SK-N-SH (cell line): ENCODE measurements at regions of chr2 and their contacts with region 1.

Region 1: GRCh38 chr2:23351388-23352141 is 33.4 kb upstream of the KLHL29 start:
- DNase-seq: peak; percentile 98
- H3K4me3 ChIP-seq: no peak overlapping the region
- H3K27ac ChIP-seq: peak overlapping the region in 1 of 2 experiments; percentile 76; a peak in 2 of 4 replicates
- H3K4me1 ChIP-seq: peaks cover 4 to 24% of the 10 kb centered on the region in 2 experiments; a peak in 2 of 4 replicates
- H3K27me3 ChIP-seq: no peaks in the 10 kb centered on the region
- CTCF ChIP-seq: peak; percentile 91
- EP300 ChIP-seq: peak in 1 of 2 experiments; percentile 38; a peak in 1 of 4 replicates
- RAD21 ChIP-seq: peak; percentile 85

Region 2: DNA sequence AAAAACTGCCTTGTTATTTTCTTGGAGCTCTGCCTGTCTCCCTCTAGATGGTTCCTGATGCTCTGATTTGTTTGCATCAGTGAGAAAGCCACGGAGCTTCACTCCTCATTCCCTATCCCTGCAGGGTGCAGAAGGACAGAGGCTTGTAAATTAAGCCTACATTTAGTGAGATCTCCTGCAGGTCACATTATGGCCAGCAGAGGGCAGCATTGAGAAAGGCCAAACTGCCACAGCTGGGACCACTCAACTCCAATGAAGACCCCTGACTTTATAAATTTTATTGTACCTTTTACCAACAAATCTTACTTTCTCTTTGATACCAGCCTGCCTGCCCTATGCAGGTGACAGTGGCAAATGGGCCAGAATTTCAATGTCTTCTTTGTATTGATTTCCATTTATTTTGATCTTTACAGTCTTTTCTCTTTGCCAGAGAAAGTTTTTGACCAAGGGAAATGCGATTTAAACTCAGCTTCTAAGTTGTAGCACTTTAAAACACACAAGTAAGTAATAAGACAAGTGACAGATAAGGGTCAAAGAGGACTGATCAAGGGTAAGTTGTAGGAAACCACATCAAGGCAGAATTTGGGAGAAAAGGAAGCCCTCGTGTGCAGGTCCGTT is 995.6 kb before region 1 on chr2:
- CTCF ChIA-PET with region 1: interaction called, 29 read pairs
- POLR2A ChIA-PET with region 1: no interaction called
- DNase-seq: peak; percentile 56
- H3K4me3 ChIP-seq: peak overlapping the region in 1 of 2 experiments; percentile 42; a peak in 1 of 4 replicates
- H3K27ac ChIP-seq: no peak overlapping the region
- H3K4me1 ChIP-seq: no peaks in the 10 kb centered on the region
- H3K27me3 ChIP-seq: no peaks in the 10 kb centered on the region
- CTCF ChIP-seq: peak; percentile 68
- EP300 ChIP-seq: no peak
- RAD21 ChIP-seq: peak; percentile 84

Region 3: DNA sequence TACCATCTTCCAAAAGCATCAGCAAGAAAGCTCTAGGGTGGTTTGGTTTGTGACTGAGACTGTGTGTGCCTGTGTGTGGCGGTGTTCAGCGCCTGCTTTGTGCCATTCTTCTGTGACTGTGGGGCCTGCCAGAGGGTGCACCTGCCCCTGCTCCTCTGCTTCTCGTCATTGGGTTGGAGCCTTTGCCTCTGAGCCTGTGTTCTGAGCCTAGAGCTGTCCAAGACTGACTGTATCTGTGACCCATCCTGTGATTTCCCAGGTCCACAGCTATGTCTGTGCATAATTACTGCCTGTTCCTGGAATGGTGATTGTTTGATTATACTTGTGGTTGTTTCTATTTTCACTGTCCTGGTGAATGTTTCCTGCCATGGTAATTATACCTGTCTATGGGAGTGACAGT is 23.7 kb before region 1 on chr2:
- CTCF ChIA-PET with region 1: interaction called, 16 read pairs
- POLR2A ChIA-PET with region 1: no interaction called
- DNase-seq: peak; percentile 63
- H3K4me3 ChIP-seq: no peak overlapping the region
- H3K27ac ChIP-seq: peak overlapping the region in 1 of 2 experiments; percentile 56; a peak in 2 of 4 replicates
- H3K4me1 ChIP-seq: peaks cover 0 to 16% of the 10 kb centered on the region in 2 experiments; a peak in 1 of 4 replicates
- H3K27me3 ChIP-seq: peaks cover 15% of the 10 kb centered on the region; the same call in 1 of the 2 replicates
- CTCF ChIP-seq: no peak
- EP300 ChIP-seq: peak in 1 of 2 experiments; percentile 7; a peak in 1 of 4 replicates
- RAD21 ChIP-seq: no peak

Region 4: GRCh38 chr2:23335550-23335949 is 16.0 kb before region 1 on chr2:
- CTCF ChIA-PET with region 1: interaction called, 10 read pairs
- POLR2A ChIA-PET with region 1: no interaction called
- DNase-seq: no peak
- H3K4me3 ChIP-seq: no peak overlapping the region
- H3K27ac ChIP-seq: no peak overlapping the region
- H3K4me1 ChIP-seq: peaks cover 0 to 1% of the 10 kb centered on the region in 2 experiments; a peak in 1 of 4 replicates
- H3K27me3 ChIP-seq: peaks cover 10% of the 10 kb centered on the region; the same call in 1 of the 2 replicates
- CTCF ChIP-seq: no peak
- EP300 ChIP-seq: no peak
- RAD21 ChIP-seq: no peak

Region 5: DNA sequence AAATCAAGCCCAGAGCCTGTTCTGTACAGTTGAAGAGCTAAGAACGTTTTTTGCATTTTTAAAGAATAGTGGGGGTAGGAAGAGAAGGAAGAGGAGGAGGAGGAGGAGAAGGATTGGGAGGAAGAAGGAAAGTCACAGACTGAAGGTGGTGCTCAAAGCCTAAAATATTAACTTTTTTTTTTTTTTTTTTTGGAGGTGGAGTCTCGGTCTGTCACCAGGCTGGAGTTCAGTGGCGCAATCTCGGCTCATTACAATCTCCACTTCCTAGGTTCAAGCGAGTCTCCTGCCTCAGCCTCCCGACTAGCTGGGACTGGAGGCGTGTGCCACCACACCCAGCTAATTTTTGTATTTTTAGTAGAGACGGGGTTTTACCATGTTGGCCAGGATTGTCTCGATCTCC is 15.2 kb after region 1 on chr2:
- CTCF ChIA-PET with region 1: interaction called, 32 read pairs
- POLR2A ChIA-PET with region 1: interaction called, 3 read pairs
- DNase-seq: no peak
- H3K4me3 ChIP-seq: no peak overlapping the region
- H3K27ac ChIP-seq: no peak overlapping the region
- H3K4me1 ChIP-seq: peaks cover 3 to 11% of the 10 kb centered on the region in 2 experiments; a peak in 3 of 4 replicates
- H3K27me3 ChIP-seq: no peaks in the 10 kb centered on the region
- CTCF ChIP-seq: no peak
- EP300 ChIP-seq: no peak
- RAD21 ChIP-seq: no peak

Region 6: GRCh38 chr2:23449413-23449812 is 97.8 kb after region 1 on chr2:
- CTCF ChIA-PET with region 1: no interaction called
- POLR2A ChIA-PET with region 1: no interaction called
- DNase-seq: no peak
- H3K4me3 ChIP-seq: no peak overlapping the region
- H3K27ac ChIP-seq: no peak overlapping the region
- H3K4me1 ChIP-seq: peaks cover 10 to 32% of the 10 kb centered on the region in 2 experiments; a peak in 3 of 4 replicates
- H3K27me3 ChIP-seq: no peaks in the 10 kb centered on the region
- CTCF ChIP-seq: no peak
- EP300 ChIP-seq: no peak
- RAD21 ChIP-seq: no peak

Region 7: DNA sequence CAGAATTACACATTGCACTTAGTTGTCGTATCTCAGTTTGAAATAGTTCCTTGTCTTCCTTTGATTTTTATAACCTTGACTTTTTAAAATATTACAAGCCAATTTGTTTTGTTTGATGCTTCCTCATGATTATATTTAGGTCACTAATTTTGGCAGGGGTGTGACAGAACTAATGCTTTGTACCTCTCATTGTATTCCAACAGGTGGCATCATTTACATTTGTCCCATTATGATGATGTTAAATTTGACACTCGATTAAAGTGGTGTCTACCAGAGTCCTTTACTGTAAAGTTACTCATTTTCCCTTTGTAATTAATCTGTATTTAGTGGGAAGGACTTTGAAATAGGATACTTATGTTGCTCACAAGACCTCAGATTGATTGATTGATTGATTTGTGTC is 636.8 kb after region 1 on chr2:
- CTCF ChIA-PET with region 1: no interaction called
- POLR2A ChIA-PET with region 1: no interaction called
- DNase-seq: no peak
- H3K4me3 ChIP-seq: no peak overlapping the region
- H3K27ac ChIP-seq: no peak overlapping the region
- H3K4me1 ChIP-seq: no peaks in the 10 kb centered on the region
- H3K27me3 ChIP-seq: no peaks in the 10 kb centered on the region
- CTCF ChIP-seq: peak; percentile 60
- EP300 ChIP-seq: no peak
- RAD21 ChIP-seq: peak; percentile 45